A549 (cell line): ENCODE measurements at regions of chr9 and their contacts with region 1.

Region 1: DNA sequence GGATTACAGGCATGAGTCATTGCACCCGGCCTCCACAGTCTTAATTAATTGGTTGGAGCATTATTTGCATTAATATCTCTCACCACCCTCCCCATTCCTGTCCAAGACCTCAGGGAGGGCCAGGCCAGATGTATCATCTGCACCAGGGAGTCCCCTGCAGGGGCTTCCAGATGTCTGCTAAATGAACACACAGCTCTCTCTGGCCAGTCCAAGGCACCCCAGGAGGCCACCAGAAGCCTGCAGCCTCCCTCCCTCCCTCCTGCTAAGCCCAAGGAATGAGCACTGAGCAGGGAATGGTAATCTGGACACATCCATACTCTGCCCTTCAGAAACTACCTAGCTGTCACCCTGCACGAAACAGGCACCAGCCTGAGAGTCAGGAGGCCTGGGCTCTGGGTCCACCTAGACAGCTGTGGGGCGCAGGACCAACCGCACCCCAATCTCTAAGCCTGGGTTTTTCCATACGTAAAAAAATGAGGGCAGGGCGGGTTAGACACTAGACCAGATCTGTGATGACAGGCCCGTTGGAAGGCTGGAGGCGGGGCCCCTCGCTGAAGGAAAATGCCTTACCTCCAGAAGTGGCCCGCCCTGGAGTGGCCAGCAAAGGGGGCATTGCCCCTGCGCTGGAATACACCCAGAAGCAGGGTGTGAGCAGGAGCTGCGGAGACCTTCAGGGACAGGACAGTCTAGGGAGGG is 8.3 kb downstream of the CIZ1 start:
- DNase-seq: no peak
- ATAC-seq: peak; percentile 12 to 43; a peak in 4 of 6 replicates
- H3K4me3 ChIP-seq: no peak overlapping the region
- H3K27ac ChIP-seq: no peak overlapping the region
- H3K4me1 ChIP-seq: no peaks in the 10 kb centered on the region
- CTCF ChIP-seq: no peak
- EP300 ChIP-seq: no peak
- POLR2A ChIP-seq: no peak
- RAD21 ChIP-seq: no peak

Region 2: GRCh38 chr9:128104171-128104618 is 78.8 kb before region 1 on chr9:
- CTCF ChIA-PET with region 1: no interaction called
- POLR2A ChIA-PET with region 1: no interaction called
- DNase-seq: no peak
- ATAC-seq: no peak
- H3K4me3 ChIP-seq: no peak overlapping the region
- H3K27ac ChIP-seq: no peak overlapping the region
- H3K4me1 ChIP-seq: peaks cover 17% of the 10 kb centered on the region
- CTCF ChIP-seq: no peak
- EP300 ChIP-seq: no peak
- POLR2A ChIP-seq: no peak
- RAD21 ChIP-seq: no peak

Region 3: DNA sequence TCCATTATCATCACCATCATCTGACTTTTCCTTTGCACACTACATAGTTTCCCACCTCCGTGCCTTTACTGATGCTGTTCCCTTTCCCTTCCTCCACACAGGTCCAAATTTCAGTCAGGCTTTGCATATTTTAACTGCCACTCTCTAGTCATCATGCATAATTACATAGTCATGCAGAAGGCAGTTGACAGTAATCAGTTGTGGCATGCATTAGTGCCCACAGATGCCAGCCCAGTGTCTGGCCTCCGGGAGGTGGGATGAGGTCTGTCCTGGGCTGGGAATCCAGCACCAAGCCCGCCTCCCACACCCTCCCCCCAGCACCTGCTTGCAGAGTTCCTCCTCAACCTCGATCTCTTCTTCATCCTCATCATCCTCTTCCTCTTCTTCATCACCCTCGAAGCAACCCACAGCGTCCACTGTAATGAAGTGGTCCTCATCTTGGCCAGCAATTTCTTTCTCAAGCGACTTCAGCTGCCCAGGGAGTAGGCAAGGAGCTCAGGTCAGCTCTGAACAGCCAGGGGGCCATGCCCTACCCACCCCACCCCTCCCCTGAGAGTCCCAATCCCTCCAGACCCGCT is 14.2 kb before region 1 on chr9:
- CTCF ChIA-PET with region 1: interaction called, 41 read pairs
- POLR2A ChIA-PET with region 1: interaction called, 3 read pairs
- DNase-seq: no peak
- ATAC-seq: no peak
- H3K4me3 ChIP-seq: no peak overlapping the region
- H3K27ac ChIP-seq: no peak overlapping the region
- H3K4me1 ChIP-seq: no peaks in the 10 kb centered on the region
- CTCF ChIP-seq: no peak
- EP300 ChIP-seq: no peak
- POLR2A ChIP-seq: no peak
- RAD21 ChIP-seq: no peak